AG04450 (cell line): ENCODE measurements at regions of chr21 and their contacts with region 1.

Region 1: DNA sequence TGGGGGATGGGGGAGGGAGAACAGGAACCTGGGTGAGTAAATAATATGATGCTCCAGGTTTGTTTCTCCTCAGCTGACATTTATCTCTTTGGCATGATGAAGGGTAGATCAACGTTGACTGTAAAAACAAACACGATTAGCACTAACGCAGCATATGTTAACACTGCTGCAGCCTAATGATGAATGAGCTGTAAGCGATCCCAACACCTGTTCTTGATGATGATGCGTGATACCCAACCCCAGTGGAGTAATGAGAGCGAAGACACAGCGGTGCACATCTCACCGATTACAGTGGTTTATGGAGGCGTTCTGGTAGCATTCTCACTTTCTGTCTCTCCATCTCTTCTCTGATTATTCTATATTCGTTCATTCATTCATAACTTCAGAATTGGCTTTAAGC is 640.4 kb downstream of the USP25 start:
- DNase-seq: no peak
- H3K4me3 ChIP-seq: no peak overlapping the region
- H3K27ac ChIP-seq: no peak overlapping the region
- H3K27me3 ChIP-seq: no peaks in the 10 kb centered on the region
- CTCF ChIP-seq: no peak

Region 2: GRCh38 chr21:16357994-16358393 is 12.2 kb before region 1 on chr21:
- CTCF ChIA-PET with region 1: interaction called, 10 read pairs
- POLR2A ChIA-PET with region 1: no interaction called
- DNase-seq: no peak
- H3K4me3 ChIP-seq: no peak overlapping the region
- H3K27ac ChIP-seq: no peak overlapping the region
- H3K27me3 ChIP-seq: no peaks in the 10 kb centered on the region
- CTCF ChIP-seq: no peak